Activated B cell treated with CpG ODN at 0.5 μM for 24 hours (primary cell): ENCODE measurements at regions of chr3 and their contacts with region 1.

Region 1: DNA sequence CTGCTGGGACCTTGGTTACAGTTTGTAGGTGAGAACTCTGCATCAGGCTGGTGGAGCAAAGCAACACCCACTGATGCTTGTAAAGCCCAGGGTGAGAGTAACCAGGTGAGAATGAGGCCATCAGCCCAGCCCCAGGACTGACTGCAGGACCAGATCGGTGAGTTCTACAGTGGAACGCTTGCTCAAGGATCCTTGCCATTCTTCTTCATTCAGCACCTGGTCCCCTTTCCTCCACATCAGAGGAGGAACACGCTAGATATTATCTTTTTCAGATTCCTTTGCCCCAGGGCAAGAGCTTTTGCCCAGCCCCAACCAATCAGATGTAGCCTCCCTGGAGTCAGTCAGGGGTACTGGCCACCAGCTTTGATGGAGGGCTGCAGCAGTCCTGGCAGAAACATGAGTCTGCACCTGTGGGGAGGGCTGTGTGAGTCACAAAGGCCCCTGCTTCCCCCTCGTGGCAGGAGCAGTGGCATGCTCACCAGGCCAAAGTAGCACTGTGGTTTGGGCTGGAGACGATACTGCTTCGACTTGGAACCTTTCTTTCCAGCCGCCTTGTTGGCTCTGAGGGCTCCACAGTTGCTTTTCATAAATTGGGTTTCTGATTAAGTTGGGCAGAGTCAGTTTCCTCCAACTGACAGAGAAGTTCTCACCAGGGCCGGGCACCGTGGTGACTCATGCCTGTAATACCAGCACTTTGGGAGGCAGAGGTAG is 3.5 kb upstream of the SHISA5 start:
- DNase-seq: peak; percentile 56
- ATAC-seq: peak; percentile 88
- H3K4me3 Mint-ChIP-seq: peak overlapping the region; percentile 24
- H3K27ac Mint-ChIP-seq: no peak overlapping the region
- H3K4me1 Mint-ChIP-seq: peaks cover 15% of the 10 kb centered on the region
- H3K27me3 Mint-ChIP-seq: no peaks in the 10 kb centered on the region
- CTCF ChIP-seq: peak; percentile 28

Region 2: DNA sequence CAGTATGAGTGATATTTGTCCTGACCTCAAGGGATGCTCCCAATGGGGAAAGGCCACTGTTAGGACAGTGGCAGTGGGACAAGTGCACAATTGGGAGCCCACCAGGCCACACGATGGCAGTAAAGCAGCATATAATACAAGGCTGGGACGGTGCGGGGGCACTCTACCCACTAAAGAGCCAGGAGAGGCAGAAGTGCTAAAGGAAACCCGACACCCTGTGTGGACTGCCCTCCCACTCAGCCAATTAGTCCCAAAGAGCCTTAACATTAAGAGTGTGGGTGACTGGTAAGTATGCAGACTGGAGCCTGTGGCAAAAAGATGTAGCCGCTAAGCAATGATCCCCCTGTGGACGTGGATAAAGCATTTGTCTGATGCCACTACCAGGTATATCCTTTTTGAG is 274.8 kb before region 1 on chr3:
- CTCF ChIA-PET with region 1: no interaction called
- POLR2A ChIA-PET with region 1: no interaction called
- intact Hi-C with region 1: loop called (anchors 1 kb)
- DNase-seq: peak; percentile 34
- ATAC-seq: peak; percentile 98
- H3K4me3 Mint-ChIP-seq: peak overlapping the region; percentile 32
- H3K27ac Mint-ChIP-seq: peak overlapping the region; percentile 19
- H3K4me1 Mint-ChIP-seq: peaks cover 27% of the 10 kb centered on the region
- H3K27me3 Mint-ChIP-seq: no peaks in the 10 kb centered on the region
- CTCF ChIP-seq: no peak

Region 3: DNA sequence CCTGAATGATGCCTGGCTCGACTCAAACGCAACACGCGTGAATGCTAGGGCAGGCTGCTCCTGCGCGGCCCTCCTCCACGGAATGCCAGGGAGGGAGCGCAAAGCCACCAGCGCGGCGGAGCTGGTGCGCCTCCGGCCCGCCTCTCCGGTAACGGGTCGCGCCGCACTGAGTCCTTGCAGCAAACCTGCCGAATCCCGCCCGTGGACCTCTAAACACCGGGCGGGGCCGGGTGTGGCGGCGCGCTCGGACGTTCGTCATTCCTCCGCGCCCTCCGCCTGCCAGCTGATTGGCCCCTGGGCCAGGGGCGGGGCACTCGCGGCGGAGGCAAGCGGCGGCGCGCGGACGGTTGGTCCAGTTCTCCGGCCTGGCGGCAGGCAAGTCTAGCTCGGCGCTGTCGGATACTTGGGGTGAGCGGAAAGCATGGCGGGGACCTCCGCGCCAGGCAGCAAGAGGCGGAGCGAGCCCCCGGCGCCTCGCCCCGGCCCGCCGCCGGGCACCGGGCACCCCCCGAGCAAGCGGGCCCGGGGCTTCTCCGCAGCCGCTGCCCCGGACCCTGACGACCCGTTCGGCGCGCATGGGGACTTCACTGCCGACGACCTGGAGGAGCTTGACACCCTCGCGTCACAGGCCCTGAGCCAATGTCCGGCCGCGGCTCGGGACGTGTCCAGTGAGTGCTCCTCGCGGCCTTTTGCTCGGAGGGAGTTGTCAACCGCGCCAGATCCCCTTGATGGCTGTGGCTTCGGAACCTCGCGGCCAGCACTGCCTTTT is 60.9 kb before region 1 on chr3 and contains the start of gene ATRIP:
- CTCF ChIA-PET with region 1: interaction called, 12 read pairs
- POLR2A ChIA-PET with region 1: interaction called, 4 read pairs
- intact Hi-C with region 1: no loop called
- DNase-seq: peak; percentile 88
- ATAC-seq: peak; percentile 100
- H3K4me3 Mint-ChIP-seq: peak within 1 kb of the TSS; percentile 85
- H3K27ac Mint-ChIP-seq: peak within 1 kb of the TSS; percentile 82
- H3K4me1 Mint-ChIP-seq: peaks cover 41% of the 10 kb centered on the region
- H3K27me3 Mint-ChIP-seq: no peaks in the 10 kb centered on the region
- CTCF ChIP-seq: no peak
- total RNA-seq, gene ATRIP: 10.5 and 14.6 TPM in 2 replicates

Region 4: DNA sequence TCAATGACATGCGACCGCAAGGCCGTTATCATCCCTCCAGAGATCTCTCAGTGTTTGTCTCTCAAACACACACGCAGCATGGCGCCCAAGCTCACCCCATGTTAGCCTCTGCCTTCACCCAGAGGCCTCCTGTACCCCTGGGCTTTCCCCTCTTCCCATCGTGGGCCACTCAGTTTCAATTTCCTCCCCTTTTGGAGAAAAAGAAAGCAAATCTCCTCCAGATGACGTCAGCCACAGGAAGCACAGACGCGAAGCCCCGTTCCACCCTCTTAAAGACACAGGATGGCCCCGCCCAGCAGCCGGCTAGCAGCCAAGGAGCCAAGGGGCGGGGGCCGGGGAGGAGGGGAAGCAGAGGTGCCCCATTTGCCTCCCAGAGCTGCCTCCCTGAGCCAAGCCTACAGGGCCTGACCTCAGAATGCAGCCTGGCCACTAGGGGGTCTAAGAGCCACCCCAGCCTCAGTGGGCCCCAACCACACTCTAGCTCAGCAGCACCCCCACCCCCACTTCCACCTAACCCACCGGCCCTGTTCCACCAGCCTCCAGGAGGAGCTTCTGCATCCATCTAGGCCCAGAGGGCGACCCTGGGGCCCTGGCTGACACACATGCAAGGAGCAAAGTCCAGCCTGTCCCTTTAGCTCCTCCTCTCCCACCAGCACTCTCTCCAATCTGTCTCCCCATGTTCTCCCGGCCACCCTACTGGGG is 34.4 kb before region 1 on chr3:
- CTCF ChIA-PET with region 1: interaction called, 19 read pairs
- POLR2A ChIA-PET with region 1: interaction called, 28 read pairs
- intact Hi-C with region 1: no loop called
- DNase-seq: peak; percentile 84
- ATAC-seq: peak; percentile 89
- H3K4me3 Mint-ChIP-seq: peak overlapping the region; percentile 89
- H3K27ac Mint-ChIP-seq: peak overlapping the region; percentile 99
- H3K4me1 Mint-ChIP-seq: peaks cover 79% of the 10 kb centered on the region
- H3K27me3 Mint-ChIP-seq: no peaks in the 10 kb centered on the region
- CTCF ChIP-seq: no peak

Region 5: GRCh38 chr3:48548729-48549705 is 41.5 kb after region 1 on chr3:
- CTCF ChIA-PET with region 1: interaction called, 4 read pairs
- POLR2A ChIA-PET with region 1: no interaction called
- intact Hi-C with region 1: loop called (anchors 2 kb)
- DNase-seq: peak; percentile 66
- ATAC-seq: peak; percentile 100
- H3K4me3 Mint-ChIP-seq: no peak overlapping the region
- H3K27ac Mint-ChIP-seq: no peak overlapping the region
- H3K4me1 Mint-ChIP-seq: no peaks in the 10 kb centered on the region
- H3K27me3 Mint-ChIP-seq: no peaks in the 10 kb centered on the region
- CTCF ChIP-seq: no peak